PC-9 (cell line): ENCODE measurements at regions of chr7 and their contacts with region 1.

Region 1: DNA sequence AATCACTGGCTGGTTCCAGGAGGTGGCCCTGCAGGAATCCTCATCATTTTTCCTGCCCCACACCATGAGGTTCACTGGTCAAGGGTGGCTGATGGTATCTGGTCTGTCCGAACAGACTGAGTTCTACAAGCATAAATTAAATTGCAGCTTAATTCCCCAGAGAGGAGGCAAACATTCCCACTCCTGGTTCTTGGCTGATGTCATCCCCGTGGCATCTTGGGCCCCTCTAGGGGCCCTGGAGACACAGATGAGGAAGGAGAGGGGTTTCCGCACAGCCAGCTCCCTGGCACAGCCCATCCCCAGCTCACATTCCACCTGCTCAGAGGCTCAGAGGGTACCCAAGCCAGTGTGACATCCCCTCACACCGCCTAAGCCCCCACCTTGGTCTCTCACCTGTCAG is 5.3 kb upstream of the KLRG2 start:
- DNase-seq: no peak
- H3K4me3 ChIP-seq: no peak overlapping the region
- H3K27ac ChIP-seq: no peak overlapping the region
- H3K4me1 ChIP-seq: no peaks in the 10 kb centered on the region
- H3K27me3 ChIP-seq: no peaks in the 10 kb centered on the region
- CTCF ChIP-seq: no peak

Region 2: DNA sequence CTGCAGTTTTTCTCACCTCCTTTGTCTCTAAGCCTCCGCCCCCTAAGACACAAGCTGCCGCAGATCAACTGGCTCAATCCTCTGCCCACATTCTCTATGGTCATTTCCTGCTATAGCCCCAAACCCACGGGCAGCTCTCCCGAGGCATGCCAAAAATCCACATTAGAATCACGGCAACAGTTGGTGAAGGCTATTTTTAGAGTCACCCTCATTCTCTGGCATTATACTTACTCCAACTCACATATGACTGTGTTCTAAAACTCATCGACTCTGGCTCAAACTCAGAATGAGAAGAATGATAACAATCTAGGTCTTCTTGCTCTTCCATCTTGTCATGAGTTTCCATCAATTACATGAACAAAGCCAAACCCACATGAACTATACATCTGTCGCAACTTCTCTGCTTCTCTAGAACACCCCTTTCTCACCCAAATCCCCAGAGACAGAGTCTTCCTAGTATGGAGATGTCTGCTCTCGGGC is 496.7 kb before region 1 on chr7:
- CTCF ChIA-PET with region 1: no interaction called
- POLR2A ChIA-PET with region 1: interaction called, 10 read pairs
- intact Hi-C with region 1: no loop called
- DNase-seq: no peak
- H3K4me3 ChIP-seq: no peak overlapping the region
- H3K27ac ChIP-seq: no peak overlapping the region
- H3K4me1 ChIP-seq: no peaks in the 10 kb centered on the region
- H3K27me3 ChIP-seq: no peaks in the 10 kb centered on the region
- CTCF ChIP-seq: no peak

Region 3: GRCh38 chr7:139651308-139651707 is 162.5 kb after region 1 on chr7:
- CTCF ChIA-PET with region 1: no interaction called
- POLR2A ChIA-PET with region 1: no interaction called
- intact Hi-C with region 1: no loop called
- DNase-seq: peak in 1 of 2 experiments; percentile 15
- H3K4me3 ChIP-seq: no peak overlapping the region
- H3K27ac ChIP-seq: no peak overlapping the region
- H3K4me1 ChIP-seq: peaks cover 10% of the 10 kb centered on the region
- H3K27me3 ChIP-seq: no peaks in the 10 kb centered on the region
- CTCF ChIP-seq: no peak